AG04450 (cell line): ENCODE measurements at regions of chr14 and their contacts with region 1.

Region 1: DNA sequence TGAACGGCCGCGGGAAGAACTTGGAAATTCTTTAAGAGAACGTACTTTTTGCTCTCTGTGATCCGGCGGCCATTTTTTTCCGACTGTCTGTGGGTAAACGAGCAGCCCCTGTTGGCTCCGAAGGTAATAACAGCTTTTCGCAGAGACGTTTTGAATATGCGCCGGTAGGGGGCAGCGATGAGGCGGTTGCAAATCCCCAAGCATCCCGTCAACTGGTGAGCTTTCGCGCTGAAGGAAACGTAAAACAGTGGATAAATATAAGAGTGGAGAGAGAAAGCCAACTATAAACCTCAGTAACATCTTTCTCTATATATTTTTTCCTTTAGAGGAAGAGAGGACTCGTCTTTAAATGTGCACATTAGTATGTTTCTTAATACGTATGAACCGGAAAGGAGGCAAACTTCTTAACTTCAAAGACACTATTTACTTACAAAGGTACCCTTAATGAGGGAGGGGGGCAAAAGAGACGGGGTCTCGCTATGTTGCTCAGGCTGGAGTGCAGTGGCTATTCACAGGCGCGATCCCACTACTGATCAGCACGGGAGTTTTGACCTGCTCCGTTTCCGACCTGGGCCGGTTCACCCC is 9.6 kb upstream of the NEMF start:
- DNase-seq: peak; percentile 84
- H3K4me3 ChIP-seq: peak overlapping the region; percentile 62
- H3K27ac ChIP-seq: peak overlapping the region; percentile 100
- H3K27me3 ChIP-seq: no peaks in the 10 kb centered on the region
- CTCF ChIP-seq: peak; percentile 100

Region 2: GRCh38 chr14:49306152-49306751 is 555.9 kb before region 1 on chr14:
- CTCF ChIA-PET with region 1: no interaction called
- POLR2A ChIA-PET with region 1: no interaction called
- DNase-seq: no peak
- H3K4me3 ChIP-seq: no peak overlapping the region
- H3K27ac ChIP-seq: no peak overlapping the region
- H3K27me3 ChIP-seq: no peaks in the 10 kb centered on the region
- CTCF ChIP-seq: peak; percentile 41; the same call in 1 of the 2 replicates

Region 3: DNA sequence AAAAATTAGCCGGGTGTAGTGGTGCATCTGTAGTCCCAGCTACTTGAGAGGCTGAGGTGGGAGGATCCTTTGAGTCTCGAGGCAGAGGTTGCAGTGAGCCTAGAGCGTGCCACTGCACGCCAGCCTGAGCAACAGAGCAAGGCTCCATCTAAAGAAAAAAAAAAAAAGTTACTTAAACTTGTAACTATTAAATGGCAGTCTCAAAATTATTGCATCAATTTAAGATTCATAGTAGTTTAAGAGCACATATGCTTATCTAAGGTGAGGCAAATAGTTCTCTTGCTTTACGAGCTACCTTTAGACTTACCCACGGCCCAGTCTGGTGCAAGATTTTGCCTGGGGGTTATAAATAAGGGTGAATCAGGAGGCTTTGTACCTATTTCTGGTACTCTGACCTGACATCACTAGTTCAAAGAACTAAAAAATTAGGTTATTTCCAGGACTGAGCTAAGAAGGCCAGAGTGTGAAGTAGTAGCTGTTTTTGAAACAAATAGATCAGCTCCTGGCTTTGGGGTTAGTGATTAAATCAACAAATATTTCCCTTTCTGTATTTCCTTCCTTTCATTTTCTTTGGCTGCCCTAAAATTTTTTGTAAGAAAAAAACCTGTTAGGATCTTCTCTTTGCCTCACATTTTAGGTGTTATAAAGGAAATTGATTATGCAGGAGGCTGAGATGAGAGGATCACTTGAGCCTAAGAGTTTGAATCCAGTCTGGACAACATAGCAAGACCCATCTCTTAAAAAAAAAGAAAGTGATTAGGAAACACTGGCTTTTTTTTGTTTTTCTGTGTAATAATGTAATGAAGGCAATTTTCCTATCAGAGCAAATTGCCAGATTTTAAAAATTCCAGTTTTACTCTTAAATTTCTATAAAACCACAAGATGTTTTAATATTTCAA is 238.0 kb before region 1 on chr14:
- CTCF ChIA-PET with region 1: no interaction called
- POLR2A ChIA-PET with region 1: no interaction called
- DNase-seq: no peak
- H3K4me3 ChIP-seq: no peak overlapping the region; the same call in 1 of the 2 replicates
- H3K27ac ChIP-seq: no peak overlapping the region
- H3K27me3 ChIP-seq: no peaks in the 10 kb centered on the region
- CTCF ChIP-seq: no peak

Region 4: DNA sequence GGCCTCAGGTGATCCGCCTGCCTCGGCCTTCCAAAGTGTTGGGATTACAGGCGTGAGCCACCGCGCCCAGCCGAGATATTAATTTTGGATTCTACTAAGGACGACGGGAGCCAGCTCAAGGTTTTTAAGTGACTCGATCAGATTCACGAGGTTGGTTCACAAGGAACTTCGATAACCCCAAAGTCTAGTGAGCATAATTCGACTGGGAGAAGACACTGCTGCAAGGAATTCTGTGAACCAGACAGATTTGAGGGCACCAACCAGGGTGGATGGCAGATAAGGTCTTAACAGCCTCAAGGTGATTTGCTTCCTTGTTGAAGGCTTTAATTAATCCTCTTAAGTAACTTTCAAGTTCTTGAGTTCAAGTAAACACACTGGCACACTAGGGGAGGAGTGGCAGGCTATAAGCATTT is 95.4 kb before region 1 on chr14:
- CTCF ChIA-PET with region 1: no interaction called
- POLR2A ChIA-PET with region 1: no interaction called
- DNase-seq: no peak
- H3K4me3 ChIP-seq: peak overlapping the region; percentile 97; the same call in 1 of the 2 replicates
- H3K27ac ChIP-seq: no peak overlapping the region
- H3K27me3 ChIP-seq: no peaks in the 10 kb centered on the region
- CTCF ChIP-seq: no peak

Region 5: DNA sequence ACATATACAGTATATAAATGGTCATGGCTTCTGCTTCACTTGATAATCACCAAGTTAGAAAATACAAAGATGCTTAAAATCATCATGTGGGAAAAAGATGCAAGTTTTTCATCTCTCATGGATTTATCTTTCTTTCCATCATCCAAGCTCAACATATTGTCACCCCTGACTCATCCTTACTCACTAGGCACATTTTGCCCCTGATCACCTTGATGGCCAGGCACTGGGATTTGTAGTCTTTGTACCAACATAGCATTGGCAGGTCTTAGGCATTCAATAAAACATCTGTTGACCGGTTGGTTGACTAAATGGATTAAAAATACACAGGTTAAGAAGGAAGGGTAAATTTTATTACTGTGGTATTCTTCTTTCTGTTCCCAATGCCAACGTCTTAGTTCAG is 66.2 kb before region 1 on chr14:
- CTCF ChIA-PET with region 1: no interaction called
- POLR2A ChIA-PET with region 1: interaction called, 13 read pairs
- DNase-seq: no peak
- H3K4me3 ChIP-seq: no peak overlapping the region
- H3K27ac ChIP-seq: no peak overlapping the region
- H3K27me3 ChIP-seq: no peaks in the 10 kb centered on the region
- CTCF ChIP-seq: no peak

Region 6: DNA sequence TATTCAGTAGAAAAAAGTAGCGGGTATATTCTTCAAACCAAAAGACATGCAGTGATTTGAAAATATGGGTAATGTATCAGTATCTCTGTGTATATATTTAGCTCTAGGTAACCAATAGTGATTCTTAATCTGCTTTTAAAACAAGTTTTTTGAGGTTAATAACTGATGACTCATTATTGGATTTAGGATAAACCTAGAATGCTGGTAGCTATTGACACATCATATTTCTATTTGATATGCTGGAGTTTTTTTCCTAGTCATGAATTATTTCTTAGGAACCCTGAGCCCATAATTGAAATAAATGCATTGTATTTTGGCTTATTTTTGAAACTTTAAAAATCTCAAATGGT is 46.2 kb after region 1 on chr14:
- CTCF ChIA-PET with region 1: interaction called, 10 read pairs
- POLR2A ChIA-PET with region 1: interaction called, 6 read pairs
- DNase-seq: no peak
- H3K4me3 ChIP-seq: no peak overlapping the region
- H3K27ac ChIP-seq: no peak overlapping the region
- H3K27me3 ChIP-seq: no peaks in the 10 kb centered on the region
- CTCF ChIP-seq: no peak

Region 7: GRCh38 chr14:49971156-49972130 is 109.3 kb after region 1 on chr14:
- CTCF ChIA-PET with region 1: interaction called, 7 read pairs
- POLR2A ChIA-PET with region 1: interaction called, 20 read pairs
- DNase-seq: no peak
- H3K4me3 ChIP-seq: peak overlapping the region; percentile 36
- H3K27ac ChIP-seq: peak overlapping the region; percentile 86
- H3K27me3 ChIP-seq: no peaks in the 10 kb centered on the region
- CTCF ChIP-seq: no peak

Region 8: DNA sequence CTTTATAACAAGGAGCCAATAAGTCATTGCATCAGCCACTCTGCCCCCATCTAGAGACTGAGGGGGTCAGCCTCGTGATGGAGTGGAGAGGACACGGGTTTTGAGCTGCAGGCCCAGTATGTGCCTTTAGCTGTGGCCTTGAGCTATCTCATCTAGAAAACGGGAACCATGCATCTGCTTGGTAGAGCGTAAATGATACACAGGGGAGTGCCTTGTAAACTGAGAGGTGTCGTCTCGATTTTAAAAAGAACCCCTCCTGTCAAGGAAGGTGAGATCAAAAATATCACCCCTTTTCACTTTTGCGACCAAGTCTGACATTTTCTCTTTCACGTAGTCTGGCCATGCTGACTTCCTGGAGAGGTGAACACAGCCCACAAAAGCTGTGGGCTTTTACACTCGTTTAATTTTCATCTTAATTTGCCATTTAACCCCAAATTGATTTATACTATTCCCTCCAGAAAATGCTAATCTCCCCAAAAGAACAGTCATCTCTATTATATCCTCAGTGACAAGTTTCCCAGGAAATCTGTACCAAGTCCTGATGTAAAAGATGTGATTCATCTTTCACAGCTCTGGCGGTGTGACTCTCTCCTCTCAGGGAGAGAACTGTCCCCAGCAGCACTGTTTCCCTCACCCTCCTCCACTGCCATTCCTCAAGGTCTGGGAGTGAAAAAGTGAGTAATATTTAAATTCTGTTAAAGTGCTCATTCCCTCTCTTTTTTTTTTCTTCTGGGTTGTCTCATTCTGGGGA is 223.6 kb after region 1 on chr14:
- CTCF ChIA-PET with region 1: interaction called, 28 read pairs
- POLR2A ChIA-PET with region 1: interaction called, 3 read pairs
- DNase-seq: no peak
- H3K4me3 ChIP-seq: no peak overlapping the region
- H3K27ac ChIP-seq: no peak overlapping the region
- H3K27me3 ChIP-seq: no peaks in the 10 kb centered on the region
- CTCF ChIP-seq: no peak

Region 9: GRCh38 chr14:50109342-50109741 is 247.2 kb after region 1 on chr14:
- CTCF ChIA-PET with region 1: interaction called, 256 read pairs
- POLR2A ChIA-PET with region 1: interaction called, 6 read pairs
- DNase-seq: peak; percentile 10
- H3K4me3 ChIP-seq: no peak overlapping the region
- H3K27ac ChIP-seq: no peak overlapping the region
- H3K27me3 ChIP-seq: no peaks in the 10 kb centered on the region
- CTCF ChIP-seq: peak; percentile 52

Region 10: DNA sequence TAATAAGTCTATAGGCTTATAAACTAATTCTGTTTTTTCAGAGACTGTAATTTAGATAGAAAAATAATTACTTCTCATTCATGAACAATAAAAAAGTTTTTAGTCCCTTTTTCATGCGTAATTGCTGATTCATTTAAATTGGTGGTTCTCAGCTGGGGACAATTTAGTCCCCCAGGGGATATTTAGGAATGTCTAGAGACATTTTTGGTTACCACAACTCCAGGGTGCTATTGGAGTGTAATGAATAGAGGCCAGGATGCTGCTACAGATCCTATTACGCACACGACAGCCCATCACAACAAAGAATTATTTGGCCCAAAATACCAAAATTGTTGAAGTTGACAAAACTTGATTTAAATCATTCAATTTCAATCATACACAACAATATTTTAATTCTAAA is 277.0 kb after region 1 on chr14:
- CTCF ChIA-PET with region 1: interaction called, 12 read pairs
- POLR2A ChIA-PET with region 1: no interaction called
- DNase-seq: no peak
- H3K4me3 ChIP-seq: no peak overlapping the region
- H3K27ac ChIP-seq: no peak overlapping the region
- H3K27me3 ChIP-seq: no peaks in the 10 kb centered on the region
- CTCF ChIP-seq: no peak